Activated CD4-positive, alpha-beta T cell treated with anti-CD3 and anti-CD28 coated beads, Interleukin-2, amount 10 ng/mL, durations not matched to agents 24 days and 14 days (primary cell): ENCODE measurements at regions of chr13 and their contacts with region 1.

Region 1: DNA sequence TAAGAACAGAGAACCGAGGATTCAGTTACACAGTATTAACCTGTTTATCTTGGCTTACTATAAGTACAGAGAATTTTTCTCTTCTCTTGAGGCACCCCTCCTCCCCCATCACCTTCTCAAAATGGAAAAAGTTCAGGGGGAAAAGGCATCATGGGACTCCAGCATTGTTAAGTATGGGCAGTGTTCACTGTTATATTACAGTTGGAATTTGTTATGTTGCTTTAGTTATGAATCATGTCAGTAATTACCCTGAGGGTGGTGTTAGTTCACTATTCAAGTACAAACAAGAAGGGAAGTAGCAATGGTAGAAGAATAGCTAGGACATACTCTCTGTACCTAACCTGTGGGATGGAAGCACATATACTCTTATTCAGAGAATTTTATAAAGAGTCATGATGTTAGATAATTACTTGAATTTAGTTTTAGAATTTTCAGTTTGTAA is 12.0 kb downstream of the LPAR6 start:
- DNase-seq: no peak
- H3K4me3 Mint-ChIP-seq: peak overlapping the region; percentile 48
- H3K27ac Mint-ChIP-seq: peak overlapping the region; percentile 25
- H3K4me1 Mint-ChIP-seq: peaks cover 43% of the 10 kb centered on the region
- H3K27me3 Mint-ChIP-seq: no peaks in the 10 kb centered on the region

Region 2: DNA sequence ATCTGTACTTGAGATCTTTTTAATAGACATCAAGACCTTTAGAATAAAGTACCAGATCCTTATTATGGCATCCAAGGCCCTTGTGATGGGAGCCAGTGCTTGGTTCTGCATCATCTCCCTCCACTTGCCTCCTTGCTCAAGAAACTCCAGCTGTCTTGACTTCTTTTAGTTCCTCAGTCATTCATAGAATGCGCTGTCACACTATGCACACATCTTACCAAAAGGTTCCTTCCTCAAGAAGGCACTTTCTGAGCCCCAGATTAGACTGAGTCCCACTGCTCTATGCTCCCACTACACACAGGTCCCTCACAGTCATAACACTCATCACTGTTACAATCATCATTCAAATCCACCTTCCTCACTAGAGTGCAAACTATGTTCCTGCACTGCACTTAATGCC is 225.7 kb before region 1 on chr13:
- intact Hi-C with region 1: no loop called
- DNase-seq: no peak
- H3K4me3 Mint-ChIP-seq: no peak overlapping the region
- H3K27ac Mint-ChIP-seq: no peak overlapping the region
- H3K4me1 Mint-ChIP-seq: no peaks in the 10 kb centered on the region
- H3K27me3 Mint-ChIP-seq: peaks cover 11% of the 10 kb centered on the region

Region 3: GRCh38 chr13:48220981-48221685 is 179.7 kb before region 1 on chr13:
- intact Hi-C with region 1: loop called (anchors 2 kb)
- DNase-seq: peak; percentile 73
- H3K4me3 Mint-ChIP-seq: peak overlapping the region; percentile 69
- H3K27ac Mint-ChIP-seq: peak overlapping the region; percentile 78
- H3K4me1 Mint-ChIP-seq: peaks cover 35% of the 10 kb centered on the region
- H3K27me3 Mint-ChIP-seq: peaks cover 15% of the 10 kb centered on the region

Region 4: DNA sequence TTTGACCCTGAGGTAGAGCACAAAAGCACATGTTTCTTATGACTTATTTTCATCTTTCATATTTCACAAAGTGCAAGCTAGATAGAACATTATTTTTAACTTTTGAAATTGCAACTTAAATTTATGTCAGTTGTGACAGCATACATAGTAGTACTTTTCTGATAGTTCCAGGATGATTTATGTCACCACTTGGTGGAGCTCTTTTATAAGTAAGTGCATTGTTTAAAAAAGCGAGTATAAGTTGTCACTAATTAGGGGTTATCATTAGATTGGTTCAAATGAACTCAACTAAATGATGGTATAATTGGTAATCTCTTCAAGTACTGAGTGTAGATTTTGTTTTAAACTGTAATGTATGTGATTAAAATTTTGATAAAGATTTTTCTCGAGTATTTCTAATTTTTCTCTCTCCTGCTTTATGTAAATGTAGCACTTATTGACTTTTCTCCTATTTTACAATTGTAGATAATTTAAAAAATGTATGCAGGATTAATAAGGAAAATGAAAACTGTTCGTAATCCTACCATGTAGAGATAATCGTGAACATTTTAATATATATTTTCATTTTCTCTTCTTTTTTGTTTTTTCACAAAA is 66.2 kb before region 1 on chr13:
- intact Hi-C with region 1: loop called (anchors 5 kb)
- DNase-seq: peak; percentile 65
- H3K4me3 Mint-ChIP-seq: no peak overlapping the region
- H3K27ac Mint-ChIP-seq: no peak overlapping the region
- H3K4me1 Mint-ChIP-seq: peaks cover 6% of the 10 kb centered on the region
- H3K27me3 Mint-ChIP-seq: no peaks in the 10 kb centered on the region

Region 5: GRCh38 chr13:48443442-48444208 is 42.8 kb after region 1 on chr13:
- intact Hi-C with region 1: loop called (anchors 1 kb)
- DNase-seq: no peak
- H3K4me3 Mint-ChIP-seq: peak overlapping the region; percentile 20
- H3K27ac Mint-ChIP-seq: peak overlapping the region; percentile 27
- H3K4me1 Mint-ChIP-seq: peaks cover 12% of the 10 kb centered on the region
- H3K27me3 Mint-ChIP-seq: no peaks in the 10 kb centered on the region

Region 6: GRCh38 chr13:48505597-48506091 is 104.8 kb after region 1 on chr13:
- intact Hi-C with region 1: loop called (anchors 1 kb)
- DNase-seq: peak; percentile 89
- H3K4me3 Mint-ChIP-seq: peak overlapping the region; percentile 64
- H3K27ac Mint-ChIP-seq: peak overlapping the region; percentile 84
- H3K4me1 Mint-ChIP-seq: peaks cover 66% of the 10 kb centered on the region
- H3K27me3 Mint-ChIP-seq: peaks cover 7% of the 10 kb centered on the region

Region 7: DNA sequence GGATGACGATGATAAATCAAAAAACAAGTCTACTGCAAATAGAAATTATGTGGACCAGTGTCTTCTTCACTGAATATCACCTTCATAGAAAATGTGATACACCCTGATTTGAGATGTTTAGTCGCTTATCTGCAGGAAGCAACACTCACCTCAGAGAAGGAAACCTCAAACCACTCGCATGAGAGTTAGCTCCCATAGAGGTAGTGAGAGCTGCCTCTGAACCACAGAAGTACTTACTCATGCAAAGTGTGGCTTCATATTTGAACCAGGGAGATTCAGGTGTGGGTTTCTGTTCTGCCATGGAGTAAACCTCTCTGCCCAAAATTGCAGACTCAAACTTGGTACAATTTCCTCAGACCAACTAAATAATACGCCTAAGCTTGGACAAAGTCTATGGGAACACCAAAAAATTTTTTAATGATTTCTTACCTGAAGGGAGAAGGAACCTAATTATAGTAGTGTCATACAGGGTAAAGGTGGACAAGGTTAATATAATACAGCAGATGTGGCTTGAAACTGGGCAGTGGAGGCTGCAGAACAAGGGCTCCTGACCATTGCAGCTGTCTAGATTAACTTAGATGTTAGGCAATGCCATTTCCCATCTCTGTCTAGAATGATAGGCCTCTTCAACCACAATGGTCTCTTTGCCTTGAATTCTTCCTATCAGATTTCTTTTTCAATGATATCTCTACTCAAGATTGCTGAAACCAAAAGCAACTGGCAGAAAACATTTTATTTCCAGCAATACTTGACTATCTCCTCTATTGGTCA is 161.6 kb after region 1 on chr13:
- intact Hi-C with region 1: loop called (anchors 1 kb)
- DNase-seq: peak; percentile 94
- H3K4me3 Mint-ChIP-seq: peak overlapping the region; percentile 14
- H3K27ac Mint-ChIP-seq: peak overlapping the region; percentile 62
- H3K4me1 Mint-ChIP-seq: peaks cover 40% of the 10 kb centered on the region
- H3K27me3 Mint-ChIP-seq: peaks cover 59% of the 10 kb centered on the region